Aorta (tissue), 5 donors: ENCODE measurements at regions of chr1 and their contacts with region 1.

Region 1: GRCh38 chr1:2233997-2234761 is 6.1 kb downstream of the SKI start:
- DNase-seq: peak; percentile 95 to 96
- ATAC-seq: peak; percentile 77
- H3K4me3 ChIP-seq: peak overlapping the region in 1 of 2 donors; percentile 4
- H3K27ac ChIP-seq: peak overlapping the region; percentile 58 to 82
- H3K4me1 ChIP-seq: peaks cover 0 to 6% of the 10 kb centered on the region in 2 donors
- H3K27me3 ChIP-seq: no peaks in the 10 kb centered on the region

Region 2: GRCh38 chr1:2279210-2279639 is 45.0 kb after region 1 on chr1:
- intact Hi-C with region 1: loop called in 1 of 2 experiments (anchors 5 kb)
- DNase-seq: peak in 1 of 2 donors; percentile 91
- ATAC-seq: peak; percentile 67
- H3K4me3 ChIP-seq: no peak overlapping the region
- H3K27ac ChIP-seq: peak overlapping the region in 1 of 2 donors; percentile 68
- H3K4me1 ChIP-seq: no peaks in the 10 kb centered on the region
- H3K27me3 ChIP-seq: no peaks in the 10 kb centered on the region

Region 3: GRCh38 chr1:2299131-2299627 is 65.0 kb after region 1 on chr1:
- intact Hi-C with region 1: loop called in 1 of 2 experiments (anchors 5 kb)
- DNase-seq: peak in 1 of 2 donors; percentile 76
- ATAC-seq: peak; percentile 3
- H3K4me3 ChIP-seq: no peak overlapping the region
- H3K27ac ChIP-seq: peak overlapping the region in 1 of 2 donors; percentile 2
- H3K4me1 ChIP-seq: no peaks in the 10 kb centered on the region
- H3K27me3 ChIP-seq: no peaks in the 10 kb centered on the region

Region 4: GRCh38 chr1:2314803-2315673 is 80.9 kb after region 1 on chr1:
- intact Hi-C with region 1: loop called (anchors 5 kb)
- DNase-seq: peak; percentile 77 to 89
- ATAC-seq: peak; percentile 39
- H3K4me3 ChIP-seq: peak overlapping the region; percentile 30 to 41
- H3K27ac ChIP-seq: peak overlapping the region in 1 of 2 donors; percentile 4
- H3K4me1 ChIP-seq: no peaks in the 10 kb centered on the region
- H3K27me3 ChIP-seq: no peaks in the 10 kb centered on the region

Region 5: GRCh38 chr1:2372551-2373490 is 138.6 kb after region 1 on chr1:
- intact Hi-C with region 1: no loop called
- DNase-seq: peak; percentile 46 to 67
- ATAC-seq: no peak
- H3K4me3 ChIP-seq: no peak overlapping the region
- H3K27ac ChIP-seq: no peak overlapping the region
- H3K4me1 ChIP-seq: no peaks in the 10 kb centered on the region
- H3K27me3 ChIP-seq: no peaks in the 10 kb centered on the region